ENCODE measurements at regions of chr14 and their contacts with region 1.

Region 1: GRCh38 chr14:69715725-69716477 is 51.0 kb upstream of the SRSF5 start:
- DNase-seq: peak; percentile 85
- H3K4me3 ChIP-seq: peak overlapping the region in 1 of 3 experiments; percentile 4
- H3K27ac ChIP-seq: peak overlapping the region; percentile 73
- H3K4me1 ChIP-seq: peaks cover 46% of the 10 kb centered on the region
- H3K27me3 ChIP-seq: no peaks in the 10 kb centered on the region
- CTCF ChIP-seq: no peak
- POLR2A ChIP-seq: no peak

Region 2: GRCh38 chr14:69611201-69612011 is 104.5 kb before region 1 on chr14 and contains the start of gene SUSD6:
- CTCF ChIA-PET with region 1: interaction called, 10 read pairs
- POLR2A ChIA-PET with region 1: interaction called, 5 read pairs
- dilution Hi-C with region 1: no loop called
- intact Hi-C with region 1: loop called (anchors 1 kb)
- DNase-seq: peak; percentile 85
- H3K4me3 ChIP-seq: peak within 1 kb of the TSS; percentile 94 to 97 (median 96)
- H3K27ac ChIP-seq: peak within 1 kb of the TSS; percentile 89
- H3K4me1 ChIP-seq: peaks cover 34% of the 10 kb centered on the region
- H3K27me3 ChIP-seq: no peaks in the 10 kb centered on the region
- CTCF ChIP-seq: no peak
- POLR2A ChIP-seq: peak; percentile 14
- total RNA-seq, gene SUSD6: 19.5 and 29.0 TPM in 2 replicates

Region 3: GRCh38 chr14:69650948-69651369 is 64.9 kb before region 1 on chr14:
- CTCF ChIA-PET with region 1: interaction called, 3 read pairs
- POLR2A ChIA-PET with region 1: no interaction called
- dilution Hi-C with region 1: no loop called
- intact Hi-C with region 1: loop called (anchors 2 kb)
- DNase-seq: peak; percentile 64
- H3K4me3 ChIP-seq: no peak overlapping the region
- H3K27ac ChIP-seq: peak overlapping the region; percentile 30
- H3K4me1 ChIP-seq: peaks cover 43% of the 10 kb centered on the region
- H3K27me3 ChIP-seq: no peaks in the 10 kb centered on the region
- CTCF ChIP-seq: no peak
- POLR2A ChIP-seq: no peak

Region 4: DNA sequence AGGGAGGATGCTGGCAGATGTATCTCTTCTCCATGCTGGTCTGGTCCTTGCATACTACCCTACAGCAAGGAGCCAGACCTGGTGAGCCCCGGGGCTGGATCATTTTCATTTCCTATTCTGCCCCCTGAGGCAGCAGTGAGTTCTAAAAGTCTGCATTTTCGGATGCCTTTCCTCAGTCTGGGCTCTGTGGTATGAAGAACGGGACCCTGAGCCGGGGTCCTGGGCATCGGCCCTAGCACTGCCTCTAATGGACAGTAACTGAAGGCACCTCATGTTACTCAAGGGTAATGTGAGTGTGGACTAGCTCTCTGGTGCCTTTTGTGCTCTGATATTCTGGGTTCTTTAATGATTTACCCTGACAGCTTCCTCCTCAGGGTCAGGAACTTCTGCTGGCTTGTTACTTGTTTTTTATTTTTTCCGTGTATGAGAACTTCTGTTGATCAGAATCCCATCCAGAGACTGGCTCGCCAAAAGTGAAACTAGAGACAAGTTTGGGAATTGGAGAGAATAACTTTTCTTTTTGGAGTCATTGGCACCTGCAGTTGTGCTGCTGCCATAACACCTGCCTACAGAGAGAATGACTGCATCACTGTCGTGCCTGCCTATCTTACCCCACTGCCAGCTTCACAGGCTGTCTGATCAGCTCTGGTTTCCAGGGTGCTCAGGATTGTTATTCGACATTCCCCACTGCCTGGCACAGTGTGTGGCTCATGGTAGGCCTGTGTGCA is 42.2 kb before region 1 on chr14:
- CTCF ChIA-PET with region 1: no interaction called
- POLR2A ChIA-PET with region 1: no interaction called
- dilution Hi-C with region 1: no loop called
- intact Hi-C with region 1: no loop called
- DNase-seq: peak; percentile 47
- H3K4me3 ChIP-seq: no peak overlapping the region
- H3K27ac ChIP-seq: no peak overlapping the region
- H3K4me1 ChIP-seq: no peaks in the 10 kb centered on the region
- H3K27me3 ChIP-seq: no peaks in the 10 kb centered on the region
- CTCF ChIP-seq: no peak
- POLR2A ChIP-seq: no peak

Region 5: GRCh38 chr14:69695322-69696203 is 20.3 kb before region 1 on chr14:
- CTCF ChIA-PET with region 1: interaction called, 5 read pairs
- POLR2A ChIA-PET with region 1: no interaction called
- dilution Hi-C with region 1: no loop called
- intact Hi-C with region 1: loop called (anchors 1 kb)
- DNase-seq: peak; percentile 79
- H3K4me3 ChIP-seq: no peak overlapping the region
- H3K27ac ChIP-seq: no peak overlapping the region
- H3K4me1 ChIP-seq: peaks cover 4% of the 10 kb centered on the region
- H3K27me3 ChIP-seq: no peaks in the 10 kb centered on the region
- CTCF ChIP-seq: no peak
- POLR2A ChIP-seq: no peak